ENCODE measurements at regions of chr2 and their contacts with region 1.

Region 1: DNA sequence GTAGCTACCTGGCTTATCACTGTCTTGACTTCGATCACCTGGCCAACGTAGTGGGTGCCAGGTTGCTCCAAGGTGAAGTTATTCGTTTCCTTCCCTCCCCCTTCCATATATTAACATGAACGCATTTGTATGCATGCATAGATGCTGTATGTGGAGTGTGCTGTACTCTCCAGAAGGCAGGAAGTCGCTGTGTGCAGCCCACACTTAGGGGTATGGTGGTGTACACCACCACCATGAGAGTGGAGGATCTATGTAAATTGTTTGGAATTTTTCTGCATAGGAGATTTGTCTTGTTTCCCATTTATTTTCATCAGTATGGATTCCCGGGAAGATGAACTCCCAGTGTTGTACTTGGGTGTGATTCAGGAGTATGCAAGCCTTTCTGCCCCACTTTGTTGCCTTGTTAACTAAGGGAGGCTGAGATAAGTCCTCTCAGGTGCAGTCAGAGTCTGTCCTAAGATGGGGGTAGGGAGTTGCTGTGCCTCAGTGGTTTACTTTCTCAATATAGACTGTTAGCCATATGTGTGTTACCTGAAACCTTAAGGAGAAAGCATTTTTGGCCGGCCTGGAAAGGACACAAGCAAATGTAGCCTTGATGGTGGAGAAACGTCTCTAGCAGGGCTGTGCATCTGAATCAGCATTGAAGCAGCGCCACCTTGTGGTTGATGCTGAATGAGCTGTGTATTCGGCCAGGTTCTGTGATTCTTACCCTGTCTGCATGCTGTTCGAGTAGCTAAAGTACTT is 149.8 kb downstream of the TANC1 start:
- DNase-seq: peak; percentile 92

Region 2: DNA sequence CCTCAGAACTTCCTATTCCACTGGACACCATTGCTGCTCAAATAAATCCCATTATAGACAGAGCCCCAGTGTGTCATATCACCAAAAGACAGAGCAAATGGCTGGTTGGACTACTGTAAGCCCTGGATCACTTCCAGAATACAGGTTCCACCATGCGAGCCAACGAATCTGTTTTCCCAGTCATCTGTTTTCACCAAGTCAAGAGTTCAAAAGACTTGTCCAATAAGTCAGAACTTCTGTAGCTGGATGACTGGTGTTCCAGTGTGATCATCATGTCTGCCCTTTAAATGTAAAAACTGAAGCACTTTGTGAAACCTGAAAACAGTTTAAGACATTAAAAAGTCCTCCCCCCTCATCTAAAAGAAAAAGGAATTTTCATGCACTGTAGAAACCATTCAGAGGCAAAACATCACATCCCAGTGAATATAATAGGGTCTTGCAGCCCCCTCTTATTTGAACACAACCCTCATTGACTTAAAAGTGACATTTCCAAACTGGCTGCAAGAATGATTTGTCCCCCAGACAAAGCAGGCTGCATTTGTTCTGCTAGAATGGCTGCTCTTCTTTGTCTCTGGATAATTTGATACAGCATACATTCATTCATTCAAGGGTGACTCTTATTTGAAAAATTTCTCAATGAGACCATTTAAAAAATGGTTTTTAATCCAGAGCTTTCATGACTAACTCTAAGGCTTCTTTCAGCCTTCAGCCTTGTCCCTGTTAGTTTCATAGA is 214.4 kb before region 1 on chr2:
- intact Hi-C with region 1: loop called (anchors 1 kb)
- DNase-seq: no peak

Region 3: DNA sequence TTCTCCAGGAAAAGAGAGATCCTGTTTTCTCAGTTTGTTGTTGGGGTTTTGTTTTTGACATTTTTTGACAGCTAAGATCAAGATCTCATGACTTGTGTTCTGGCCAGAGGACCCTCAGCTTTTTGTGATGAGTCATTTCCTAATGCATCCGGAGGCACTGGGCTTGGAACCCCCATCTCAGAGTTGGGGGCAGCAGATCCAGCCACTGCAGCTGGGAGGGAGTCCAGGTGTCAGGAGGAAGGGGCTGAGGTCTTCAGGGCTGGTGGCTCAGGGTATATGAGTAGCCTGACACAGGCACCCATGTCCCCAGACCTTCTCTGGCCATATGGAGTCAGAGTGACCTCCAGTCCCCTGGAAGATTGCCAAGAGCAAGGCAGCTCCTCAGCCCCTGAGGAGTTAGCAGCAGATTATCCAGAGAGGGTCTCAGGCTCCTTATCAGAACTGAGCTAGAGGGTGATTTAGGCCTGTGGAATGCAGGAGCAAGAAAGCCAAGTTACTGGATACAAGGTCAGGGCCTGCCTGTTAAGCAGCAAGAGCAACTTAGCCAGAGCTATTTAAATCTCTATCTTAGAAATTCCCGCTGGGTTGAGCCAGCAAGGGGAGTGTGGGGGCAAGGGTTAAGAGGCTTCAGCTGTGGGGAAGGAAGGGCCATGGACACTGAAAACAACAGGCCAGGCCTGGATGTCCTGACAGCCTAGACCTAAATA is 87.5 kb before region 1 on chr2:
- intact Hi-C with region 1: loop called (anchors 5 kb)
- DNase-seq: peak; percentile 78